Caco-2 (cell line): ENCODE measurements at regions of chr15 and their contacts with region 1.

Region 1: DNA sequence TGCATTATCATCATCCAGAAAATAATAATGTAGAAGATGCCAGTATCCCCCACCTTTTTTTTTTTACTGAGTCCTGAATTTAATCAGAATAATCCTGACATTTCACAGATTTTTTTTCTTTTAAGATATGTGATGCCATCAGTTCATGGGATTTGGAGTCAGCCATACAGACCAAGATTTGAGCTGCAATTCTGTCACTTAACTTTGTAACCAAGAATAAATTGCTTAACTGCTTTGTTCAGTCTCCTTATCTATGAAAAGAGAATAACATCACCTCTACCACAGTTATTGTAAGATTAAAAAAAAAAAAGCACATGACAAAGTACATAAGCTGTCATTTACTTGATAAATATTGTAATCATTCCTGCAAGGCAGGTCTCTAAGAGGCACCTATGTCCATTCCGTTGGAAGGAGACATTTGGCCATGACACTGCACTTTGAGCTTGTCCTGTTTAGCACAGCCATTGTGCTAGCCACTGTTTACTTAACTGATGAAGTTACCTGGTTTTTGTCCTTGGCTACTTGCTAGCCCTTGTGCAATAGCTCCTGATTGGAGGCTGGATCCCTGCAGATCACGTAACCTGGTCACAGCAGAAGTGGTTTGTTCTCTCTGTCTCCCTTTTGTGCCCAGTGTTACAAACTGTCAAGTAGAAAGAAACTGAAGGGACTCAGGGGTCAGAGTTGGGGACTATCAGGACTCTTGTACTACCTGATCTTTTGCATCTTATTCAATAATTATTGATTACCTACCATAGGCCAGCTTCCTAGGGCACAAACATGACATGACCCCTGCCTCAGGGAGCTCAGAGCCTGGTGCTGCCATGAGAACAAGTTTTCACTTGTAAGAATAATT is 306.0 kb downstream of the WDR72 start:
- DNase-seq: peak; percentile 67 to 76
- H3K4me3 ChIP-seq: no peak overlapping the region
- H3K4me3 Mint-ChIP-seq: no peak overlapping the region
- H3K27ac Mint-ChIP-seq: no peak overlapping the region
- H3K4me1 ChIP-seq: peaks cover 37% of the 10 kb centered on the region
- H3K4me1 Mint-ChIP-seq: peaks cover 21% of the 10 kb centered on the region
- H3K27me3 ChIP-seq: no peaks in the 10 kb centered on the region
- H3K27me3 Mint-ChIP-seq: no peaks in the 10 kb centered on the region
- CTCF ChIP-seq: no peak

Region 2: DNA sequence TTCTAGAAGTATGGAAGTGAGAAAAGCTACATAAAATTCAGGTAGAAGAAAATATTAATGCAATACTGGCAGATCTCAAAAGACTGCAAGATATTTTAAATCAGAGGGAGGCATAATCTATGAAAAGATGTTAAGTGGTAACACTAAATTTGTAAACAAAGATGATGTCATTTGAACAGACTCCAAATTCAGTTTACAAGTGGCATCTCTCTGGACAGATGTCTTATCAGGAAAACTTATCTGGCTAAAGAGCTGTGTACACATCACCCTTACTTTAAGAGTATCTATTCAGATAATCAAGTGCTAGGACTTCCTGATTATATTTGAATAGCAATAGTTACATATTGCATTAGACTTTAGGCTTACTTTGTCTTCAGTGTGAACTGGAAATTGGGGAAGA is 74.5 kb after region 1 on chr15:
- CTCF ChIA-PET with region 1: no interaction called
- POLR2A ChIA-PET with region 1: no interaction called
- intact Hi-C with region 1: loop called (anchors 1 kb)
- DNase-seq: no peak
- H3K4me3 ChIP-seq: no peak overlapping the region
- H3K4me3 Mint-ChIP-seq: no peak overlapping the region
- H3K27ac Mint-ChIP-seq: no peak overlapping the region
- H3K4me1 ChIP-seq: peaks cover 10% of the 10 kb centered on the region; the same call in 1 of the 2 replicates
- H3K4me1 Mint-ChIP-seq: peaks cover 9% of the 10 kb centered on the region
- H3K27me3 ChIP-seq: no peaks in the 10 kb centered on the region
- H3K27me3 Mint-ChIP-seq: peaks cover 4% of the 10 kb centered on the region
- CTCF ChIP-seq: no peak

Region 3: DNA sequence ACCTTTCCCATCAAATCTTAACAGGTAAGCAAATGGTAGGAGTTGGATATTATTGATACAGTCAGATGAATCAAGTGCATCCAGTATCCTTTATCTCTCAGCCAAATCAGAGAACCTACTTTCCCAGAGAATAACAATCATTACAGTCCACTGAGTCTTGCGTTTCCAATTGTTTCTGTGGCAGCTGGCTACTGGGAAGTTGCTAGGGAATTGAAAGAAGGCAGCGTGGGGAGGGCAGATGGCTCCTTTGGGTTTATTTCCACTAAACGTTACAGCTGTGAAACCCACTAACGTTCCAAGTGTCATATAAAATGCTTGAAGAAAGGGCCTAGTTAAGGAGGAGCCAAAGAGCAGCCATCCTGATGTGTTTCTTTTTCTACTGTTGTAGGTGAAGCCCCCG is 227.6 kb after region 1 on chr15:
- CTCF ChIA-PET with region 1: no interaction called
- POLR2A ChIA-PET with region 1: no interaction called
- intact Hi-C with region 1: loop called (anchors 1 kb)
- DNase-seq: no peak
- H3K4me3 ChIP-seq: no peak overlapping the region
- H3K4me3 Mint-ChIP-seq: no peak overlapping the region
- H3K27ac Mint-ChIP-seq: no peak overlapping the region
- H3K4me1 ChIP-seq: no peaks in the 10 kb centered on the region
- H3K4me1 Mint-ChIP-seq: no peaks in the 10 kb centered on the region
- H3K27me3 ChIP-seq: no peaks in the 10 kb centered on the region
- H3K27me3 Mint-ChIP-seq: no peaks in the 10 kb centered on the region
- CTCF ChIP-seq: no peak

Region 4: GRCh38 chr15:53833134-53833624 is 379.7 kb after region 1 on chr15:
- CTCF ChIA-PET with region 1: no interaction called
- POLR2A ChIA-PET with region 1: no interaction called
- intact Hi-C with region 1: loop called (anchors 1 kb)
- DNase-seq: peak in 1 of 2 experiments; percentile 42
- H3K4me3 ChIP-seq: no peak overlapping the region
- H3K4me3 Mint-ChIP-seq: peak overlapping the region; percentile 44
- H3K27ac Mint-ChIP-seq: peak overlapping the region; percentile 91
- H3K4me1 ChIP-seq: peaks cover 86% of the 10 kb centered on the region
- H3K4me1 Mint-ChIP-seq: peaks cover 73% of the 10 kb centered on the region
- H3K27me3 ChIP-seq: no peaks in the 10 kb centered on the region
- H3K27me3 Mint-ChIP-seq: no peaks in the 10 kb centered on the region
- CTCF ChIP-seq: no peak